CD4-positive, alpha-beta T cell (primary cell): ENCODE measurements at regions of chr9 and their contacts with region 1.

Region 1: GRCh38 chr9:89466451-89467277 is 31.2 kb downstream of the SEMA4D start:
- DNase-seq: peak in 2 of 14 experiments; percentile 43 to 52
- ATAC-seq: peak; percentile 2
- H3K4me3 ChIP-seq: peak overlapping the region; percentile 12
- H3K4me3 Mint-ChIP-seq: peak overlapping the region; percentile 76
- H3K27ac ChIP-seq: peak overlapping the region; percentile 64 to 84
- H3K27ac Mint-ChIP-seq: peak overlapping the region; percentile 96
- H3K4me1 ChIP-seq: peaks cover 93% of the 10 kb centered on the region
- H3K4me1 Mint-ChIP-seq: peaks cover 97% of the 10 kb centered on the region
- H3K27me3 ChIP-seq: no peaks in the 10 kb centered on the region
- H3K27me3 Mint-ChIP-seq: no peaks in the 10 kb centered on the region
- CTCF ChIP-seq: no peak

Region 2: DNA sequence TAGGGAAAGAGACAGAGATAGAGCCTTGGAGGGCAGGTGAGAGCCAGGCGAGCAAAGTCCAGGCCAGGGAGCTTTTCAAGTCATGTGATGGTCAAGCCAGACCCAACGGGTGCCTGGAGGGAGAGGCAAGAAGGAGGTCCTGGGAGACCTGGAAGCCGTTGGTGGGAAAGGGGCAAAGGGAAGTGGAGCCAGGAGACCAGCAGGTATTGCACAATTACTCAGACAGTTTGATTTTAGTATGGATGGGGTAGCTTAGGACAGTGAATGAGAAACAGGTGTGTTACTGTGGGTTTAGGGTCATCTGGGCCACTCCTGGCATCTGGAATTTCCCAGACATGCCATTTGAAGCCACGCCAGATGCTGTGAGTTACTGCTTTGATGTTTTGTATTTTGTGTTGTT is 143.3 kb before region 1 on chr9:
- CTCF ChIA-PET with region 1: no interaction called
- POLR2A ChIA-PET with region 1: no interaction called
- intact Hi-C with region 1: no loop called
- DNase-seq: no peak
- ATAC-seq: no peak
- H3K4me3 ChIP-seq: no peak overlapping the region
- H3K4me3 Mint-ChIP-seq: peak overlapping the region; percentile 13
- H3K27ac ChIP-seq: no peak overlapping the region
- H3K27ac Mint-ChIP-seq: peak overlapping the region; percentile 67
- H3K4me1 ChIP-seq: peaks cover 24% of the 10 kb centered on the region
- H3K4me1 Mint-ChIP-seq: peaks cover 69% of the 10 kb centered on the region
- H3K27me3 ChIP-seq: no peaks in the 10 kb centered on the region
- H3K27me3 Mint-ChIP-seq: no peaks in the 10 kb centered on the region
- CTCF ChIP-seq: no peak

Region 3: GRCh38 chr9:89442981-89443814 is 23.5 kb before region 1 on chr9:
- CTCF ChIA-PET with region 1: no interaction called
- POLR2A ChIA-PET with region 1: interaction called, 7 read pairs
- intact Hi-C with region 1: loop called in 1 of 2 experiments (anchors 2 kb)
- DNase-seq: peak in 2 of 14 experiments; percentile 49 to 60
- ATAC-seq: no peak
- H3K4me3 ChIP-seq: no peak overlapping the region
- H3K4me3 Mint-ChIP-seq: no peak overlapping the region
- H3K27ac ChIP-seq: peak overlapping the region; percentile 66 to 71
- H3K27ac Mint-ChIP-seq: peak overlapping the region; percentile 96
- H3K4me1 ChIP-seq: peaks cover 99% of the 10 kb centered on the region
- H3K4me1 Mint-ChIP-seq: peaks cover 86% of the 10 kb centered on the region
- H3K27me3 ChIP-seq: no peaks in the 10 kb centered on the region
- H3K27me3 Mint-ChIP-seq: no peaks in the 10 kb centered on the region
- CTCF ChIP-seq: no peak

Region 4: GRCh38 chr9:89483592-89484522 is 17.2 kb after region 1 on chr9:
- CTCF ChIA-PET with region 1: interaction called, 3 read pairs
- POLR2A ChIA-PET with region 1: interaction called, 23 read pairs
- intact Hi-C with region 1: loop called (anchors 2 kb)
- DNase-seq: peak in 13 of 14 experiments; percentile 54 to 87 (median 70)
- ATAC-seq: peak; percentile 72
- H3K4me3 ChIP-seq: peak overlapping the region; percentile 72
- H3K4me3 Mint-ChIP-seq: peak overlapping the region; percentile 94
- H3K27ac ChIP-seq: peak overlapping the region; percentile 52 to 67
- H3K27ac Mint-ChIP-seq: peak overlapping the region; percentile 88
- H3K4me1 ChIP-seq: peaks cover 77% of the 10 kb centered on the region
- H3K4me1 Mint-ChIP-seq: peaks cover 91% of the 10 kb centered on the region
- H3K27me3 ChIP-seq: no peaks in the 10 kb centered on the region
- H3K27me3 Mint-ChIP-seq: no peaks in the 10 kb centered on the region
- CTCF ChIP-seq: no peak

Region 5: GRCh38 chr9:89489548-89490530 is 23.2 kb after region 1 on chr9:
- CTCF ChIA-PET with region 1: no interaction called
- POLR2A ChIA-PET with region 1: interaction called, 14 read pairs
- intact Hi-C with region 1: loop called in 1 of 2 experiments (anchors 5 kb)
- DNase-seq: peak in 4 of 14 experiments; percentile 33 to 92 (median 89)
- ATAC-seq: peak; percentile 84
- H3K4me3 ChIP-seq: peak overlapping the region; percentile 0
- H3K4me3 Mint-ChIP-seq: peak overlapping the region; percentile 76
- H3K27ac ChIP-seq: peak overlapping the region; percentile 65 to 67
- H3K27ac Mint-ChIP-seq: peak overlapping the region; percentile 88
- H3K4me1 ChIP-seq: peaks cover 76% of the 10 kb centered on the region
- H3K4me1 Mint-ChIP-seq: peaks cover 92% of the 10 kb centered on the region
- H3K27me3 ChIP-seq: no peaks in the 10 kb centered on the region
- H3K27me3 Mint-ChIP-seq: no peaks in the 10 kb centered on the region
- CTCF ChIP-seq: no peak